Breast epithelium (tissue), 4 donors: ENCODE measurements at regions of chr4 and their contacts with region 1.

Region 1: GRCh38 chr4:22246847-22247246 is 269.0 kb downstream of the ADGRA3 start:
- DNase-seq: no peak
- H3K4me3 ChIP-seq: no peak overlapping the region
- H3K27ac ChIP-seq: no peak overlapping the region
- H3K4me1 ChIP-seq: no peaks in the 10 kb centered on the region
- H3K27me3 ChIP-seq: no peaks in the 10 kb centered on the region
- CTCF ChIP-seq: no peak
- POLR2A ChIP-seq: no peak

Region 2: DNA sequence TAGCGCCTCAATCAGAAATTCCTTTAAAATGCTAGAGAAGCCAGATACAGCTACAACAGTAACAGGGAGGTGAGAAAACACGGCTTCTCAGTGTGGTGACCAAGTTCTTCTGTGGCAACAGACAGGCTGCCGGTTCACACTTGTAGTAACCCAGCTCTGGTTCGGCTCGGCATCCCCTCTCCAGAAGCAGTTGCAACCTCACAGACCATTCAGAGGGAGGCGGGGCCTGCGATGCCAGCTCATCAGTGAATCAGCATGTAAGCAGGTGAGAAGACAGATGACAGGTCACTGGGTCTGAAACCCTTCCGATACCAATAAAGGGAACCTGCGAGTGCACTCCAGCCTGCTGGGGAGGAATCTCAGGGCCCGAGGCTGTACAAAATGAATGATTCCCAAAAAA is 549.3 kb before region 1 on chr4:
- intact Hi-C with region 1: loop called (anchors 5 kb)
- DNase-seq: no peak
- H3K4me3 ChIP-seq: no peak overlapping the region
- H3K27ac ChIP-seq: no peak overlapping the region
- H3K4me1 ChIP-seq: no peaks in the 10 kb centered on the region
- H3K27me3 ChIP-seq: no peaks in the 10 kb centered on the region
- CTCF ChIP-seq: no peak
- POLR2A ChIP-seq: no peak

Region 3: DNA sequence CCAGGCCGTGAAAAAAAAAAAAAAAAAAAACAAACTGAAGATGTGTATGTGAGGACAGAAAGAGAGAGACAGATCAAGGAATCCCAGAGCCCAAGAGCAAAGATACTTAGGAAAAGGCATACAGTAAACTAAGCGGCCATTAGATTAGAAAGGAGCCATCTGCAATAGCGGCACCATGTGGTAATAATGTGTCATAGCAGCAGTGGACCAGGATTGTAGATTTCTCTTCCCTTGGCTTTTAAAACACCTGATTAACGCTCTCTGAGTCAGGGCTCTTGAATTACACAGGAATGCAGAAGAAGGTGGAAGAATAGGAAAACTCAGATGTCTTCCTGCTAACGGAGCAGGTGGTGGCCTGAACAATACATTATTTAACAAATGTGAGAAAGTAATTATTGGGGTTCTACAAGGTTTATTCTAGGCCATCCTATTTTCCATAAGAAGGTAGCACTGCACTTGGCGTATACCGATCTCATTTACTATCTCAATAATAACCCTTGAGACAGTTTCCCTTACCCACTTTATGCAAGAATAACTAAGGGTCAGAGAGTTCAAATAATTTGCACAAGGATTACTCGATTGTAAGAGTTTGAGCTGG is 480.9 kb before region 1 on chr4:
- intact Hi-C with region 1: loop called (anchors 10 kb)
- DNase-seq: no peak
- H3K4me3 ChIP-seq: no peak overlapping the region
- H3K27ac ChIP-seq: no peak overlapping the region
- H3K4me1 ChIP-seq: no peaks in the 10 kb centered on the region
- H3K27me3 ChIP-seq: no peaks in the 10 kb centered on the region
- CTCF ChIP-seq: peak in 2 of 3 donors; percentile 49 to 60
- POLR2A ChIP-seq: no peak

Region 4: GRCh38 chr4:22220965-22221364 is 25.9 kb before region 1 on chr4:
- intact Hi-C with region 1: no loop called
- DNase-seq: no peak
- H3K4me3 ChIP-seq: no peak overlapping the region
- H3K27ac ChIP-seq: no peak overlapping the region
- H3K4me1 ChIP-seq: no peaks in the 10 kb centered on the region
- H3K27me3 ChIP-seq: no peaks in the 10 kb centered on the region
- CTCF ChIP-seq: no peak
- POLR2A ChIP-seq: no peak

Region 5: GRCh38 chr4:22235698-22236097 is 11.1 kb before region 1 on chr4:
- intact Hi-C with region 1: no loop called
- DNase-seq: no peak
- H3K4me3 ChIP-seq: no peak overlapping the region
- H3K27ac ChIP-seq: no peak overlapping the region
- H3K4me1 ChIP-seq: no peaks in the 10 kb centered on the region
- H3K27me3 ChIP-seq: no peaks in the 10 kb centered on the region
- CTCF ChIP-seq: no peak
- POLR2A ChIP-seq: no peak

Region 6: DNA sequence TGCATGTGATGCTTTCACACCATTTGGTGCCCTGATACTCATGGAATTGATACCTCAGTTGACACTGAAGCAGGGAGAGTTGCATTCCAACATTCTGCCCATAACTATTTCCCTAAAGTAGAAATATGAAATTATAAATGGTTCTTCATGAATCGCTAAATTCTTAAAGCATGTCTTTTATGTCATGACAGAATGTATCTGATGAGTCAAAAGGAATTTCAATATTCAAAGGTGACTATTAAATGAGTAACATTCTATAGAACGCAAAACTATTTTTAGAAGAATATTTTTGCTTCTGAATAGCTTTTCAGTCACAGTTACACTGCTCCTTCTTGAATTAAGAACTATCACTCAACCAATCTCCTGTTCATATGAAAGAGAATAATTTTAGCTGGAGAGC is 116.2 kb after region 1 on chr4:
- intact Hi-C with region 1: no loop called
- DNase-seq: no peak
- H3K4me3 ChIP-seq: no peak overlapping the region
- H3K27ac ChIP-seq: no peak overlapping the region
- H3K4me1 ChIP-seq: no peaks in the 10 kb centered on the region
- H3K27me3 ChIP-seq: no peaks in the 10 kb centered on the region
- CTCF ChIP-seq: no peak
- POLR2A ChIP-seq: no peak

Region 7: DNA sequence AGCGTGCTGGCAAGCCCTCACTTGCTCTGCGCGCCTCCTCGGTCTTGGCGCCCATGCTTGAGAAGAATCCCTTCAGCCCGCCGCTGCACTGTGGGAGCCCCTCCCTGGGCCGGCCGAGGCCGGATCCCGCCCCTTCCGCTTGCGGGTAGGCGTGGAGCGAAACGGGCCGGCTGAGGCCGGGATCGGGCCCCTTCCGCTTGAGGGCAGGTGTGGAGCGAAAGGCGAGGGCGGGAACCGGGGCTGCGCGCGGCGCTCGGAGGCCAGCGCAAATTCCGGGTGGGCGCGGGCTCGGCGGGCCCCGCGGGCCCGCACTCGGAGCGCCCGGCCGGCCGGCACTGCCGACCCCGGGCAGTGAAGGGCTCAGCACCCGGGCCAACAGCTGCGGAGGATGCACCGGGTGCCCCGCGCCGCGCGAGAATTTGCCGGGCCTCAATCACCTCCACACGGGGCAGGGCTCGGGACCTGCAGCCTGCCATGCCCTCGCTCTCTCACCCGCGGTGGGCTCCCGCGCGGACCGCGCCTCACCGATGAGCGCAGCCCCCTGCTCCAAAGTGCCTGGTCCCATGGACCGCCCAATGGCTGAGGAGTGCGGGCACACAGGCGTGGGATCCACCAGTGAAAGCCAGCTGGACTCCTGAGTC is 387.8 kb after region 1 on chr4:
- intact Hi-C with region 1: no loop called
- DNase-seq: no peak
- H3K4me3 ChIP-seq: peak overlapping the region in 1 of 3 donors; percentile 51
- H3K27ac ChIP-seq: no peak overlapping the region
- H3K4me1 ChIP-seq: no peaks in the 10 kb centered on the region
- H3K27me3 ChIP-seq: no peaks in the 10 kb centered on the region
- CTCF ChIP-seq: no peak
- POLR2A ChIP-seq: no peak